ENCODE measurements at regions of chr6 and their contacts with region 1.

Region 1: GRCh38 chr6:142845624-142846458 is 99.1 kb downstream of the HIVEP2 start:
- DNase-seq: peak; percentile 48
- H3K4me3 Mint-ChIP-seq: peak overlapping the region; percentile 81
- H3K27ac Mint-ChIP-seq: peak overlapping the region; percentile 91
- H3K4me1 Mint-ChIP-seq: peaks cover 91% of the 10 kb centered on the region
- H3K27me3 Mint-ChIP-seq: no peaks in the 10 kb centered on the region

Region 2: DNA sequence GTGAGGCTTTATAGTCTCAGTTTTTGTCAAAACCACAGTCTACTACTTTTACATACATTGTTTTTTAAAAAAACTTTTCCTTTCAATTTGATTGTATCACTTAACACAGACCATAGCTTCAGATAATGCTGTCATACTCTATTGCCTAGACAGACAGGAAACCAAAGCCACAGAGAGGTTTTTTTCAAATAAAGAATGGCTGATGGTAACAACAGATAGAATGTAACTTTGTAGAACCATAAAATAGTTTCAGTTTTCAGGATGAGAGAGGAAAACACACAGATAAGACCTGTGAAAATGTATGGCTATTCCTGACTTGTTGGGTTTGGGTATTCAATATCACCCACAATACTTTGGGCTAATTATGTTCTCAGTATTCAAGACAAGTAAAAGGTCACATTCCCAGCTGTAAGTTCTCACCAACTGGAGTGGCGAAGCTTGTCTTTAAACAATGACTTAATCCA is 450.0 kb before region 1 on chr6:
- intact Hi-C with region 1: loop called (anchors 1 kb)
- DNase-seq: peak; percentile 12
- H3K4me3 Mint-ChIP-seq: no peak overlapping the region
- H3K27ac Mint-ChIP-seq: peak overlapping the region; percentile 10
- H3K4me1 Mint-ChIP-seq: peaks cover 15% of the 10 kb centered on the region
- H3K27me3 Mint-ChIP-seq: peaks cover 56% of the 10 kb centered on the region

Region 3: GRCh38 chr6:142802124-142802523 is 43.7 kb before region 1 on chr6:
- intact Hi-C with region 1: loop called (anchors 1 kb)
- DNase-seq: no peak
- H3K4me3 Mint-ChIP-seq: peak overlapping the region; percentile 55
- H3K27ac Mint-ChIP-seq: peak overlapping the region; percentile 82
- H3K4me1 Mint-ChIP-seq: peaks cover 80% of the 10 kb centered on the region
- H3K27me3 Mint-ChIP-seq: no peaks in the 10 kb centered on the region

Region 4: DNA sequence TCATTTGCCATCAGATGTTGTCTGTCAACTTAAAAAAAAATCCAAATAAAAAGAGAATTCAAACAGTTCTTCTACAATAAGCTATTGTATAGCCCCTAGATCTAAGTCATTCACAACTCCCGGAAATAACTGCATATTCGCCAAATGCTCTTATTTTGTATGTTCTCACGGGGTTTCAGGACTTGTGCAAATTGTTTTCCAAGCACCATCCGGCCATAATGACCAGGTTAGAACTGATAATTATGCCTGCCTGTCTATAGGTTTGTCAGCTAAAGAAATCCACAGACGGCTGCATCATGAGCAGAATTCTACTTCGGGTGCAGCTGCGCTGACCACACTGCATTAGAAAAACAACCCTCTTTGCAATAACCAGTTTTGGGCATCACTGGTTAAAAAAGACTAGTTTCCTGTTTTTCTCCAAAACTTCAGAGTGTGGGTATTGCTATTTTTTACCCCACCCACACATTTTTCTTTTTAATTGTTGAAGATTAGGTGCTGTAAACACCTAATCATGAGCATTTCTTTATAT is 11.5 kb after region 1 on chr6:
- intact Hi-C with region 1: loop called (anchors 2 kb)
- DNase-seq: no peak
- H3K4me3 Mint-ChIP-seq: peak overlapping the region; percentile 80
- H3K27ac Mint-ChIP-seq: peak overlapping the region; percentile 95
- H3K4me1 Mint-ChIP-seq: peaks cover 81% of the 10 kb centered on the region
- H3K27me3 Mint-ChIP-seq: no peaks in the 10 kb centered on the region

Region 5: DNA sequence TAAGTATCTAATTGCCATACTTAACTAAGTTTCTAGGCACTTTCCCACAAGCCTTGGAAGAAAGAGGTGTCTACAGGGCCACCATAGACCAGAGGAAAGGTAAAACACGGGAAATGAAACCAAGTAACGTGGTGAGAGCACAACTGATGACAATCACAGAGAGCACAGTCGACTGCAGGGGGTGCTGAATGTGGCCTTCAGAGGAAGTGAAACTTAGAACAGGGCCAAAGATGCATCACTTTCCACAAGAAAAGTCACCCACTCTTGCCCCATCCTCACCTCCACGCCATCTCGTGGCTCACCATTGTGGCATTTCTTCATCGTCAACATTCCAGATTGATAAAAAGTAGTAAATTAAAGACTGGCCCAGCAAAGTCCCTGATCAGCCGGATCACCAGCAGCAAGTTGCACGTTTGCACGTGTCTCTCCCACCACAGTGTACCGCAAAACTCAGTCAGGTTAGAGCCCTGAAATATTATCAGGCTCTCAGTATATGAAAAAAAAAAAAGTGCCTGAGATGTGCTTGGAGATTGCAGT is 67.7 kb after region 1 on chr6:
- intact Hi-C with region 1: loop called (anchors 1 kb)
- DNase-seq: peak; percentile 73
- H3K4me3 Mint-ChIP-seq: peak overlapping the region; percentile 64
- H3K27ac Mint-ChIP-seq: peak overlapping the region; percentile 92
- H3K4me1 Mint-ChIP-seq: peaks cover 63% of the 10 kb centered on the region
- H3K27me3 Mint-ChIP-seq: no peaks in the 10 kb centered on the region

Region 6: GRCh38 chr6:143441680-143442545 is 596.1 kb after region 1 on chr6:
- intact Hi-C with region 1: loop called (anchors 2 kb)
- DNase-seq: peak; percentile 13
- H3K4me3 Mint-ChIP-seq: peak overlapping the region; percentile 53
- H3K27ac Mint-ChIP-seq: peak overlapping the region; percentile 91
- H3K4me1 Mint-ChIP-seq: peaks cover 61% of the 10 kb centered on the region
- H3K27me3 Mint-ChIP-seq: no peaks in the 10 kb centered on the region

Measured in activated T-helper 1 cell treated with anti-CD3 and anti-CD28 coated beads, Interleukin-12 subunit alpha, Interleukin-12 subunit beta, Interleukin-2, Interleukin-4 antibody, amounts not matched to agents 30 ng/mL and 10 ng/mL and 1 ng/mL, durations not matched to agents 14 hours and 24 hours and 36 hours (primary cell).